Activated B cell treated with CpG ODN at 0.5 μM for 24 hours (primary cell): ENCODE measurements at regions of chr2 and their contacts with region 1.

Region 1: GRCh38 chr2:68345129-68345875 is 19.8 kb upstream of the PLEK start:
- DNase-seq: no peak
- ATAC-seq: no peak
- H3K4me3 Mint-ChIP-seq: no peak overlapping the region
- H3K27ac Mint-ChIP-seq: no peak overlapping the region
- H3K4me1 Mint-ChIP-seq: peaks cover 3% of the 10 kb centered on the region
- H3K27me3 Mint-ChIP-seq: peaks cover 3% of the 10 kb centered on the region
- CTCF ChIP-seq: no peak

Region 2: GRCh38 chr2:67871686-67872412 is 473.5 kb before region 1 on chr2:
- CTCF ChIA-PET with region 1: no interaction called
- POLR2A ChIA-PET with region 1: no interaction called
- intact Hi-C with region 1: no loop called
- DNase-seq: no peak
- ATAC-seq: no peak
- H3K4me3 Mint-ChIP-seq: no peak overlapping the region
- H3K27ac Mint-ChIP-seq: no peak overlapping the region
- H3K4me1 Mint-ChIP-seq: no peaks in the 10 kb centered on the region
- H3K27me3 Mint-ChIP-seq: peaks cover 29% of the 10 kb centered on the region
- CTCF ChIP-seq: no peak

Region 3: GRCh38 chr2:68311033-68311432 is 34.3 kb before region 1 on chr2:
- CTCF ChIA-PET with region 1: interaction called, 4 read pairs
- POLR2A ChIA-PET with region 1: no interaction called
- intact Hi-C with region 1: loop called (anchors 5 kb)
- DNase-seq: no peak
- ATAC-seq: no peak
- H3K4me3 Mint-ChIP-seq: no peak overlapping the region
- H3K27ac Mint-ChIP-seq: no peak overlapping the region
- H3K4me1 Mint-ChIP-seq: no peaks in the 10 kb centered on the region
- H3K27me3 Mint-ChIP-seq: peaks cover 3% of the 10 kb centered on the region
- CTCF ChIP-seq: no peak

Region 4: GRCh38 chr2:68689553-68690537 is 344.5 kb after region 1 on chr2:
- CTCF ChIA-PET with region 1: no interaction called
- POLR2A ChIA-PET with region 1: no interaction called
- intact Hi-C with region 1: no loop called
- DNase-seq: no peak
- ATAC-seq: peak; percentile 79
- H3K4me3 Mint-ChIP-seq: peak overlapping the region; percentile 59
- H3K27ac Mint-ChIP-seq: peak overlapping the region; percentile 91
- H3K4me1 Mint-ChIP-seq: peaks cover 40% of the 10 kb centered on the region
- H3K27me3 Mint-ChIP-seq: no peaks in the 10 kb centered on the region
- CTCF ChIP-seq: no peak